CD4-positive, alpha-beta T cell (primary cell): ENCODE measurements at regions of chr9 and their contacts with region 1.

Region 1: GRCh38 chr9:105447814-105448812 is at the start of gene FSD1L:
- DNase-seq: peak; percentile 51 to 90 (median 72)
- ATAC-seq: peak; percentile 92
- H3K4me3 ChIP-seq: peak within 1 kb of the TSS; percentile 66
- H3K4me3 Mint-ChIP-seq: peak within 1 kb of the TSS; percentile 89
- H3K27ac ChIP-seq: no peak within 1 kb of the TSS
- H3K27ac Mint-ChIP-seq: peak within 1 kb of the TSS; percentile 28
- H3K4me1 ChIP-seq: peaks cover 11% of the 10 kb centered on the region
- H3K4me1 Mint-ChIP-seq: peaks cover 6% of the 10 kb centered on the region
- H3K27me3 ChIP-seq: no peaks in the 10 kb centered on the region
- H3K27me3 Mint-ChIP-seq: no peaks in the 10 kb centered on the region
- CTCF ChIP-seq: no peak
- total RNA-seq, gene FSD1L: 0.38 to 0.56 TPM

Region 2: GRCh38 chr9:105557771-105558610 is 109.9 kb after region 1 on chr9 and contains the start of gene FKTN:
- CTCF ChIA-PET with region 1: no interaction called
- POLR2A ChIA-PET with region 1: no interaction called
- intact Hi-C with region 1: loop called in 1 of 2 experiments (anchors 5 kb)
- DNase-seq: peak; percentile 56 to 87 (median 72)
- ATAC-seq: peak; percentile 96
- H3K4me3 ChIP-seq: peak within 1 kb of the TSS; percentile 94
- H3K4me3 Mint-ChIP-seq: peak within 1 kb of the TSS; percentile 93
- H3K27ac ChIP-seq: peak within 1 kb of the TSS; percentile 30 to 47
- H3K27ac Mint-ChIP-seq: peak within 1 kb of the TSS; percentile 83
- H3K4me1 ChIP-seq: peaks cover 12% of the 10 kb centered on the region
- H3K4me1 Mint-ChIP-seq: peaks cover 19% of the 10 kb centered on the region
- H3K27me3 ChIP-seq: no peaks in the 10 kb centered on the region
- H3K27me3 Mint-ChIP-seq: no peaks in the 10 kb centered on the region
- CTCF ChIP-seq: no peak
- total RNA-seq, gene FKTN: 5.7 to 5.8 TPM